GM12878 (cell line): ENCODE measurements at regions of chr4 and their contacts with region 1.

Region 1: DNA sequence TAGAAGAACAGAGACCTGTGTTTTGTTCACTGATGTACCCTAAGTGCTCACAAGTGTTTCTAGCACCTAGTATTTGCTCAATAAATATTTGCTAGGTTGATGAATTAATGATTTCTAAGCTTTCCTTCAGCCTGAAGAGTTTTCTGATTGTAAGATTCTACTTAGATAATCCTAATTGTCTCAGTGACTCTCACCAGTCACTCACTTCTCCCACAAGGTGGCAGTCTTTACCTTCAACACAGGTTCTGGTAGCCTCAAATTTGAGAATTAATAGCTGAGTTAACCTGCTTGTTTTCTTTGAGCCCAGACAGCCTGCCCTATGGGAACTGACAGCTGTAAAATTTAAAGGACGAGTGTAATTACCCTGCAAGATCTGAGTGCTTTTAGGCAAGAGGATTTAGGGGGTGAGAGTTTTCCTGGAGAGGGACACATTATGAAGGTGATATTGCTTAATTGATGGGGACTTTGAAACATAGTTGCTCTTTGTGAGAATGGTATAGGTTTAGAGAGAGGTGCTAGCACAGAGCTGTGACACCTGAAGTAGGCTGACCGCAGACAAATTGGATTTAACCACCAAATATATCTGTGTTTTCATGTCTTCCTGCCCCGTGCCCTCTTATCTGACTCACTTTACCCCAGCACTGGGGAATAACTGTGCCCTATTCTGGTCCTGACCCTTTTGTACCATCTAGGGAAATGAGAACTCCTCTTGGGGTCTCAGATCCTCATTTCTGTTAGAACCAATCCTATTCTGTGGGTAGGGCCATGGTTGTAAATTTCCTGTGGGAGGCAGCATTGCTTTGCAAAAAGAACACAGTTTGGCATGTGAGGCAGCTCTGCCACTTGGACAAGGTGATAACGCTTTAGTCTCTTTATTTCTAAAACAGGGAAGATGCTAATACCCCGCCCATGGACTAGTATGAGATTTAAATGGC is 27.7 kb downstream of the CD38 start:
- DNase-seq: peak; percentile 48
- ATAC-seq: peak; percentile 76
- H3K4me3 ChIP-seq: no peak overlapping the region
- H3K27ac ChIP-seq: no peak overlapping the region
- H3K4me1 ChIP-seq: peaks cover 12% of the 10 kb centered on the region; the same call in 1 of the 2 replicates
- H3K27me3 ChIP-seq: no peaks in the 10 kb centered on the region
- CTCF ChIP-seq: peak; percentile 60 to 75 (median 69)
- EP300 ChIP-seq: peak in 1 of 2 experiments; percentile 40; a peak in 1 of 4 replicates
- POLR2A ChIP-seq: no peak
- RAD21 ChIP-seq: peak; percentile 84

Region 2: GRCh38 chr4:15562114-15562513 is 243.7 kb before region 1 on chr4:
- CTCF ChIA-PET with region 1: no interaction called
- POLR2A ChIA-PET with region 1: no interaction called
- RAD21 ChIA-PET with region 1: no interaction called
- SMC1A ChIA-PET with region 1: no interaction called
- in situ Hi-C with region 1: no loop called
- intact Hi-C with region 1: no loop called
- DNase-seq: no peak
- ATAC-seq: no peak
- H3K4me3 ChIP-seq: no peak overlapping the region
- H3K27ac ChIP-seq: no peak overlapping the region
- H3K4me1 ChIP-seq: no peaks in the 10 kb centered on the region
- H3K27me3 ChIP-seq: no peaks in the 10 kb centered on the region
- CTCF ChIP-seq: no peak
- EP300 ChIP-seq: no peak
- POLR2A ChIP-seq: no peak
- RAD21 ChIP-seq: no peak

Region 3: DNA sequence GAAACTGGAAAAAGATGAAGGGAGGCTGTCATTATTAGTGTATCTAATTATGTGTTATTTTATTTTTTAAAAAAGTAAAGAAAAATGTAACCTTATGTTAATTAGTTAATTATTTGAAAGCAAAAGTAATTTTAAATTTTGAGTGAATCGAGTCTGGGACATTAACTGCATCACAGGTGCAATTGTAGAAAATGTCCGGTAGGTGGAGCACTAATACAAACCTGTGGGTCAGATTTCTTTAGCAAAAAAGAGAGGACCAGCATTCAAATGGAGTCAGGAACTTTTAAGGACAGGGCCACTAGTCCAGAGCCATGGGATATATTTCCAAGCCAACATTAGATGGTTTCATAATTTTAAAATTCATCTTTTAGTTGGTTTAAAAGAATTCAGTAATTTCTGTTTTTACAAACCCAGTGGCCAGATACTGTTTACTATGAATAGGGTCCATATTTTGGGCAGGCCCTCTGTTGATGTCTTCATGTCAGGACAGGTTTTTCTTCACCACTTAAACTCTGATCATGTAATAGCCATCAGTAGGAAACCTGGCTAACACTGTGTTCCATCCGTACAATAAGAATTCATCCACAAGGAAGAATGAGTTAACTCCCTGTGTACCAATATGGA is 75.8 kb before region 1 on chr4:
- CTCF ChIA-PET with region 1: interaction called, 31 read pairs
- POLR2A ChIA-PET with region 1: interaction called, 5 read pairs
- RAD21 ChIA-PET with region 1: interaction called, 39 read pairs
- SMC1A ChIA-PET with region 1: interaction called, 25 read pairs
- in situ Hi-C with region 1: no loop called
- intact Hi-C with region 1: loop called (anchors 1 kb)
- DNase-seq: peak; percentile 2
- ATAC-seq: peak; percentile 84
- H3K4me3 ChIP-seq: no peak overlapping the region
- H3K27ac ChIP-seq: no peak overlapping the region
- H3K4me1 ChIP-seq: no peaks in the 10 kb centered on the region
- H3K27me3 ChIP-seq: no peaks in the 10 kb centered on the region; a peak in 1 of 4 replicates
- CTCF ChIP-seq: peak; percentile 69 to 77 (median 74)
- EP300 ChIP-seq: no peak
- POLR2A ChIP-seq: no peak
- RAD21 ChIP-seq: peak; percentile 92

Region 4: DNA sequence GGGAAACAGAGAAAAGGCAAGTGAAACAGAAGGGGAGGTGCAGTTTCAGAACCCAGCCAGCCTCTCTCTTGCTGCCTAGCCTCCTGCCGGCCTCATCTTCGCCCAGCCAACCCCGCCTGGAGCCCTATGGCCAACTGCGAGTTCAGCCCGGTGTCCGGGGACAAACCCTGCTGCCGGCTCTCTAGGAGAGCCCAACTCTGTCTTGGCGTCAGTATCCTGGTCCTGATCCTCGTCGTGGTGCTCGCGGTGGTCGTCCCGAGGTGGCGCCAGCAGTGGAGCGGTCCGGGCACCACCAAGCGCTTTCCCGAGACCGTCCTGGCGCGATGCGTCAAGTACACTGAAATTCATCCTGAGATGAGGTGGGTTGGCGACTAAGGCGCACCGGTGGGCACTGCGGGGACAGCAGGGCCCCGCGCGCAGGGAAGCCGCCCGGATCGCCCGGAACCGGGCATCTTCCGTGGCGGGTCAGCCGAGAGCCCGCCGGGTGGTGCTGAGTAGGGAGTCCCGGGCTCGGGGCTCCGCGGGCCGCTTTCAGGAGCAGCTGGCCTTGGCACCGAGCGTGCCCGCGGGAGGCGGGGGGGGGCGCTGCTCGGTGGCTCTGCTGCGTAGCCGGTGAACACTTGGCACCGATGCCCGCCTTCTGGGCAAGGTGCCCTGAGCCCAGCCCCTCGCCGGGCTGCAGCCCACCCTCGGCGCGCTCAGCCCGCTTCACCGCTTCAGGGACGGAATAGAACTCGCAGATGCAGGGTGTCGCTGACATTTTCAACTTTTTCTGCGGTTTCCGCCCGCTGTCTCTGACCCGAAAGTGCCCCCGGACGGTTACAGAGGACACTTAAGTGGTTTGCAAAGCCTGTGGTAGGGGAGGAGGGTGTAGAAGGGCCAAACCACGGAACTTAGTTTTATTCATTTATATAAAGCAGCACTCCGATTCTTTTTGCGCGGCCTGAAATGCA is 27.3 kb before region 1 on chr4 and contains the start of gene CD38:
- CTCF ChIA-PET with region 1: interaction called, 96 read pairs
- POLR2A ChIA-PET with region 1: interaction called, 4 read pairs
- RAD21 ChIA-PET with region 1: interaction called, 27 read pairs
- SMC1A ChIA-PET with region 1: interaction called, 14 read pairs
- in situ Hi-C with region 1: no loop called
- intact Hi-C with region 1: no loop called
- DNase-seq: no peak
- ATAC-seq: peak; percentile 85
- H3K4me3 ChIP-seq: peak within 1 kb of the TSS; percentile 72
- H3K27ac ChIP-seq: peak within 1 kb of the TSS; percentile 78
- H3K4me1 ChIP-seq: peaks cover 36% of the 10 kb centered on the region
- H3K27me3 ChIP-seq: peaks cover 0 to 3% of the 10 kb centered on the region in 2 experiments; a peak in 1 of 4 replicates
- CTCF ChIP-seq: 0 out of 6 replicates have a peak, but pooled peaks of 2 of the 3 experiments have one; percentile 7 to 15
- EP300 ChIP-seq: peak; percentile 65 to 77
- POLR2A ChIP-seq: peak; percentile 78
- RAD21 ChIP-seq: no peak
- polyA plus RNA-seq, gene CD38: 3.5 to 4.8 TPM

Region 5: DNA sequence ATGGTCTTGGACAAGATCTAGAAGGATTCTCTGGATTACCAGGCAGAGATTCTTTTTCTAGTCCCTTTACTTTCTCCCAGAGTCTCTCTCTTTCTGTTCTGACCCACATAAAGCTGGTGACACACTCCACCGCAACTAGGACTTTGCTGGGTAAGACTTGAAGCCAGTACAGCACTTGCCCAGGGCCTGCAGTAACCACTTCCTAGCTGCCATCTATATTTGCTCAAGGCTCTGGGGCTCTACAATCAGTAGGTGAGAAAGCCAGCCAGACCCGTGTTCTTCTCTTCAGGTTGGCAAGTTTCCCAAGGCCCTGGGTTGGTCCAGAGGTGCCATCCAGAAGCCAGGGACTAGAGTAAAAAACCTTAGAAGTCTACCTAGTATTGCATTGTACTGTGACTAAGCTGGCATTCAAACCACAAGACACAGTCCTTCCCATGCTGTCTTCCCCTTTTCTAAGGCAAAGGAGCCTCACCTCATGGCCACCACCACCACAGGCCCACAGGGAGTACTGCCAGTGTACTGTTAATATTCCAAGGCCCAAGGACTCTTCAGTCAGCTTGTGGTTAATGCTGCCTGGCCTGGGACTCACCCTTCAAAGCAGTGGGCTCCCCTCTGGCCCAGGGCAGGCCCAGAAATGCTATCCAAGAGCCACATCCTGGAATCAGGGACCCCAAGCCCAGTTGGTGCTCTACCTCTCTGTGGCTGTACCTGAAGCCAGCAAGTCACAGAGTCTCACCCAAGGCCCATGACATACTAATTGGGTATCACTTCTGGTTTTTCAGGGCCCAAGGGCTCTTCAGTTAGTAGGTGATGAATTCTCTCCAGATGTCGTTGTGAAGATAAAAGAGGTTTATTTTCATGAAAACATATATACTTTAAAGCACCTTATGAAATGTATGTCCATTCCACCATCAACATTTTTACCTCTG is 26.9 kb after region 1 on chr4:
- CTCF ChIA-PET with region 1: interaction called, 10 read pairs
- POLR2A ChIA-PET with region 1: interaction called, 3 read pairs
- RAD21 ChIA-PET with region 1: no interaction called
- SMC1A ChIA-PET with region 1: interaction called, 5 read pairs
- in situ Hi-C with region 1: no loop called
- intact Hi-C with region 1: no loop called
- DNase-seq: no peak
- ATAC-seq: peak; percentile 91
- H3K4me3 ChIP-seq: no peak overlapping the region
- H3K27ac ChIP-seq: no peak overlapping the region
- H3K4me1 ChIP-seq: no peaks in the 10 kb centered on the region
- H3K27me3 ChIP-seq: no peaks in the 10 kb centered on the region
- CTCF ChIP-seq: no peak
- EP300 ChIP-seq: no peak
- POLR2A ChIP-seq: no peak
- RAD21 ChIP-seq: no peak

Region 6: DNA sequence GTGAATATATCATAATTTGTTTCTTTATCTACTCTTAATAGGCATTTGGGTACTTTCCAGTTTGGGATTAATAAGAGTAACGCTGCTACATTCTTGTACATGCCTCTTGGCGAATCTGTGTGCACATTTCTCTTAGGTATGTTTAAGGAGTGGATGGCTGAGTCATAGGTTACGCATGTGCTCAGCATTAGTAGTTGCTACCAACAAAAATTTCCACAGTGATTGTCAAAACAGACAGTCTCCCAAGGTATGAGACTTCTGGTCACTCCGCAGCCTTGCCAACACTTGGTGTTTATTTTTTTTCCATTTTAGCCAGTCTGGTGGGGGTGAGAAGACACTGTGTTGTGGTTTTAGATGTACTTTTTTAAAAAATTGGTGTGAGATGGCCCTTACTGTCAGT is 88.1 kb after region 1 on chr4:
- CTCF ChIA-PET with region 1: interaction called, 27 read pairs
- POLR2A ChIA-PET with region 1: interaction called, 4 read pairs
- RAD21 ChIA-PET with region 1: interaction called, 10 read pairs
- SMC1A ChIA-PET with region 1: interaction called, 9 read pairs
- in situ Hi-C with region 1: no loop called
- intact Hi-C with region 1: no loop called
- DNase-seq: no peak
- ATAC-seq: no peak
- H3K4me3 ChIP-seq: no peak overlapping the region
- H3K27ac ChIP-seq: no peak overlapping the region
- H3K4me1 ChIP-seq: peaks cover 13% of the 10 kb centered on the region; the same call in 1 of the 2 replicates
- H3K27me3 ChIP-seq: no peaks in the 10 kb centered on the region
- CTCF ChIP-seq: no peak
- EP300 ChIP-seq: no peak
- POLR2A ChIP-seq: no peak
- RAD21 ChIP-seq: no peak

Region 7: DNA sequence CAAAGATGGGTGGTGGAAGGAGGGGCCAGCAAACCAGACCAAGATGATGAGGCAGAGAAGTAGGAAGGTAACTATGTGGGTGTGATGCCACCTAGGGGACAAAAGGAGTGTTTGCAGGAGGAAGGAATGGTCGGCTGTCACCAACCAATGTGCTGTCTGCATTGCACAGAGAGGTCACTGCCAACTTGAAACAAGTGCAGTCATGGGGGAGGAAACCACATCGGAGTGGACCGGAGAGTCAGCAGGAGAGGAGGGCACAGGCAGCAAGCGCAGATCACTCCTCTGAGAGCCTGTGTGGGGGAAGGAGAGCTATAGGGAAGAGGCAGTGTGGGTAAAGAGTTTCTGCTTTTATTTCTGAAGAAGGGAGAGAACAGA is 195.6 kb after region 1 on chr4:
- CTCF ChIA-PET with region 1: interaction called, 105 read pairs
- POLR2A ChIA-PET with region 1: interaction called, 7 read pairs
- RAD21 ChIA-PET with region 1: interaction called, 25 read pairs
- SMC1A ChIA-PET with region 1: interaction called, 35 read pairs
- in situ Hi-C with region 1: loop called (anchors 5 kb)
- intact Hi-C with region 1: loop called (anchors 1 kb)
- DNase-seq: peak; percentile 13
- ATAC-seq: peak; percentile 98
- H3K4me3 ChIP-seq: no peak overlapping the region
- H3K27ac ChIP-seq: no peak overlapping the region
- H3K4me1 ChIP-seq: no peaks in the 10 kb centered on the region
- H3K27me3 ChIP-seq: no peaks in the 10 kb centered on the region
- CTCF ChIP-seq: peak; percentile 87 to 90 (median 87)
- EP300 ChIP-seq: no peak
- POLR2A ChIP-seq: no peak
- RAD21 ChIP-seq: peak; percentile 91